ENCODE measurements at regions of chr16 and their contacts with region 1.

Region 1: DNA sequence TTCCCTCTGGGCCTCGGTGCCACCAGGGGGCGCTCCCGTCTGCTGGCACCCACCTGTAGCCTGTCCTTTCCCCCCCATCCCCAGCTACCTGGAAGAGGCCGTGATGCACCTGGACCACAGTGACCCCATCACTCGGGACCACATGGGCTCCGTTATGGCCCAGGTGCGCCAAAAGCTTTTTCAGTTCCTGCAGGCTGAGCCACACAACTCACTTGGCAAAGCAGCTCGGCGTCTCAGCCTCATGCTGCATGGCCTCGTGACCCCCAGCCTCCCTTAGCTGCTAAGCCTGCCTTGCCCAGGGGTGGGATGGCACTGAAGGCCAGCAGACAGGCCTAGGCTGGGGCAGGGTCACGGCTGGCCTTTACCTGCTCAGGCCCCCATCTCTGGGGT is 818 bp upstream of the NRN1L start:
- DNase-seq: peak; percentile 49 to 86 (median 79)
- ATAC-seq: peak; percentile 91
- H3K4me3 ChIP-seq: no peak overlapping the region
- H3K4me3 Mint-ChIP-seq: no peak overlapping the region
- H3K27ac ChIP-seq: no peak overlapping the region
- H3K27ac Mint-ChIP-seq: no peak overlapping the region
- H3K4me1 ChIP-seq: no peaks in the 10 kb centered on the region
- H3K4me1 Mint-ChIP-seq: no peaks in the 10 kb centered on the region
- H3K27me3 ChIP-seq: no peaks in the 10 kb centered on the region
- H3K27me3 Mint-ChIP-seq: no peaks in the 10 kb centered on the region
- CTCF ChIP-seq: peak; percentile 85

Region 2: GRCh38 chr16:67159593-67160406 is 724.1 kb before region 1 on chr16 and contains the starts of genes FBXL8 and TRADD:
- CTCF ChIA-PET with region 1: no interaction called
- POLR2A ChIA-PET with region 1: no interaction called
- intact Hi-C with region 1: no loop called
- DNase-seq: peak; percentile 53 to 90 (median 76)
- ATAC-seq: peak; percentile 69
- H3K4me3 ChIP-seq: peak within 1 kb of the TSS; percentile 94 to 97
- H3K4me3 Mint-ChIP-seq: peak within 1 kb of the TSS; percentile 89
- H3K27ac ChIP-seq: peak within 1 kb of the TSS; percentile 74 to 93
- H3K27ac Mint-ChIP-seq: peak within 1 kb of the TSS; percentile 95
- H3K4me1 ChIP-seq: peaks cover 72% of the 10 kb centered on the region
- H3K4me1 Mint-ChIP-seq: peaks cover 60% of the 10 kb centered on the region
- H3K27me3 ChIP-seq: peaks cover 13 to 33% of the 10 kb centered on the region in 2 experiments
- H3K27me3 Mint-ChIP-seq: peaks cover 20% of the 10 kb centered on the region
- CTCF ChIP-seq: peak; percentile 60
- total RNA-seq, gene FBXL8: 4.4 to 6.4 TPM
- total RNA-seq, gene TRADD: 15.5 to 17.1 TPM

Region 3: DNA sequence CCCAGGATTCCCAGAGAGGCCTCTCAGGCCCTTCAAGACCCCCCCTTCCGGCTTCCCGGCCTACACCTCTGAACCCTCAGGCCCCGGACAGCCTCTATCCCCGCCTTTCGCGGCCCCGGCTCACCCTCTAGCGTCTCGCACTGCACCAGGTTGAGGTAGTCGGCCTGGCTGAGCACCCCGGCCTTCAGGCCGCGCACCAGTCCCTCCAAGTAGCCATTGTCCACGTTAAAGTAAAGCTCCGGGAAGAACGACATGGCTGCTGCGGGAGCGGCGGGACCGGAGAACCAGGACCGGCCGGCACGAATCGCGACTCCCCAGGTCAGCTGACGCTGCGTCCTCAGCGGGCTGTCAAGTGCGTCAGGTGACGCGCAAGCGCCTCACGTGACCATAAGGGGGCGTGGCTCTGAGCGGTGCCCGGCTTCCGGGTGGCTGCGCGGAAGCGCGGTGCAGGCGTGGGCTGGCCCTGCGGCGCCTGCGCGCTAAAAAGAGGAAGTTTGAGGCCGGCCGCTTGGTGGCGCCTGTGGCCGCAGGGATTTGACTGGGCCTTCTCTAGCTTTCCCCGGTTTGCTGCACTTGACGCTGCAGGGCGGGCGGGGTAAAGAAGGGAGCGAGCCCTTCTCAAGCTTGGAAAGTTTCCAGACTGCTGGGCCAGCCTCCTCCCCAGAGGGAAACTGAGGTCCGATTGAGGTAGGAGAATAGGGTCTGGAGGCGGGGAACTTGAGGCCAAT is 402.9 kb before region 1 on chr16 and contains the start of gene ATP6V0D1:
- CTCF ChIA-PET with region 1: no interaction called
- POLR2A ChIA-PET with region 1: no interaction called
- intact Hi-C with region 1: no loop called
- DNase-seq: peak; percentile 98 to 99 (median 99)
- ATAC-seq: peak; percentile 90
- H3K4me3 ChIP-seq: peak within 1 kb of the TSS; percentile 91 to 100
- H3K4me3 Mint-ChIP-seq: peak within 1 kb of the TSS; percentile 99
- H3K27ac ChIP-seq: peak within 1 kb of the TSS; percentile 96 to 100
- H3K27ac Mint-ChIP-seq: peak within 1 kb of the TSS; percentile 99
- H3K4me1 ChIP-seq: peaks cover 30% of the 10 kb centered on the region
- H3K4me1 Mint-ChIP-seq: peaks cover 49% of the 10 kb centered on the region
- H3K27me3 ChIP-seq: no peaks in the 10 kb centered on the region
- H3K27me3 Mint-ChIP-seq: no peaks in the 10 kb centered on the region
- CTCF ChIP-seq: peak; percentile 87
- total RNA-seq, gene ATP6V0D1: 56.3 to 62.0 TPM

Region 4: DNA sequence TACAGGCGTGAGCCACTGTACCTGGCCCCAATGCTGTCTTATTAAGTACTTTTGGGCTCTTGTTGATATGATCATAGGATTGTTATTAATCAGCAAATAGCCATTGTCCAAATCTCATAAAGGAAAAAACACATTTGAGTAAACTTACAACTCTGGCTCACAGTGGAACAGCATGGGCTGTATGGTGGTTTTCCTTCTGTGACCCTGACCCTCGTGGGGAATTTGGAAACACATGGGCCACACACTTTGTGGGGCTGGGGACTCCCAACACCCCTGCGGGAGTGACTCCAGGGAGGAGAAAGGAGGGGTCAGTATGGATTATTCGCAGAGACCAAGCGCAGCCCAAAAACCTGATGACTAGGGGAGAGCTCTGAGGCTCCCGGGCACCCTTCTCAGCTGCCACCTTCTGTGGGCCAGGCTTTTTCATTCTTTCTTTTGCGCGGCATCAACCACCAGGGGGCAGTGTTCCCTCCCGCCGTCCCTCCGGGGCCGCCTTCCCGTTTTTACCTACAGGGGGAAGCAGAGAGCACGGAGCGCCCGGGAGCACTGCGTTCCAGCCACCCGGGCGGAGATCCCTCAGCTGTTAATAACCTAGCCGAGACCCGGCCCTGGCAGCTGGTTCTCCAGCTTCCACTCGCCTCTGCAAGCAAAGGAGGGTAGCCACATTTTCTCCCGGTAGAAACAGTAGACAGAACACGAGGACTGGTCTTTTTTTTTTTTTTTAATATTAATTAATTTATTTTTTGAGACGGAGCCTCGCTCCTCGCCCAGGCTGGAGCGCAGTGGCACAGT is 67.4 kb before region 1 on chr16:
- CTCF ChIA-PET with region 1: interaction called, 17 read pairs
- POLR2A ChIA-PET with region 1: no interaction called
- intact Hi-C with region 1: no loop called
- DNase-seq: peak; percentile 79 to 96 (median 90)
- ATAC-seq: peak; percentile 99
- H3K4me3 ChIP-seq: no peak overlapping the region
- H3K4me3 Mint-ChIP-seq: peak overlapping the region; percentile 66
- H3K27ac ChIP-seq: no peak overlapping the region
- H3K27ac Mint-ChIP-seq: no peak overlapping the region
- H3K4me1 ChIP-seq: peaks cover 4% of the 10 kb centered on the region
- H3K4me1 Mint-ChIP-seq: peaks cover 5% of the 10 kb centered on the region
- H3K27me3 ChIP-seq: no peaks in the 10 kb centered on the region
- H3K27me3 Mint-ChIP-seq: no peaks in the 10 kb centered on the region
- CTCF ChIP-seq: peak; percentile 100

Region 5: GRCh38 chr16:67872786-67873537 is 10.9 kb before region 1 on chr16 and contains the start of gene EDC4:
- CTCF ChIA-PET with region 1: interaction called, 30 read pairs
- POLR2A ChIA-PET with region 1: interaction called, 7 read pairs
- intact Hi-C with region 1: no loop called
- DNase-seq: peak; percentile 75 to 94 (median 86)
- ATAC-seq: peak; percentile 92
- H3K4me3 ChIP-seq: peak within 1 kb of the TSS; percentile 87 to 97
- H3K4me3 Mint-ChIP-seq: peak within 1 kb of the TSS; percentile 90
- H3K27ac ChIP-seq: peak within 1 kb of the TSS; percentile 78 to 83
- H3K27ac Mint-ChIP-seq: peak within 1 kb of the TSS; percentile 90
- H3K4me1 ChIP-seq: peaks cover 32% of the 10 kb centered on the region
- H3K4me1 Mint-ChIP-seq: peaks cover 32% of the 10 kb centered on the region
- H3K27me3 ChIP-seq: no peaks in the 10 kb centered on the region
- H3K27me3 Mint-ChIP-seq: no peaks in the 10 kb centered on the region
- CTCF ChIP-seq: no peak
- total RNA-seq, gene EDC4: 154 to 169 TPM

Region 6: DNA sequence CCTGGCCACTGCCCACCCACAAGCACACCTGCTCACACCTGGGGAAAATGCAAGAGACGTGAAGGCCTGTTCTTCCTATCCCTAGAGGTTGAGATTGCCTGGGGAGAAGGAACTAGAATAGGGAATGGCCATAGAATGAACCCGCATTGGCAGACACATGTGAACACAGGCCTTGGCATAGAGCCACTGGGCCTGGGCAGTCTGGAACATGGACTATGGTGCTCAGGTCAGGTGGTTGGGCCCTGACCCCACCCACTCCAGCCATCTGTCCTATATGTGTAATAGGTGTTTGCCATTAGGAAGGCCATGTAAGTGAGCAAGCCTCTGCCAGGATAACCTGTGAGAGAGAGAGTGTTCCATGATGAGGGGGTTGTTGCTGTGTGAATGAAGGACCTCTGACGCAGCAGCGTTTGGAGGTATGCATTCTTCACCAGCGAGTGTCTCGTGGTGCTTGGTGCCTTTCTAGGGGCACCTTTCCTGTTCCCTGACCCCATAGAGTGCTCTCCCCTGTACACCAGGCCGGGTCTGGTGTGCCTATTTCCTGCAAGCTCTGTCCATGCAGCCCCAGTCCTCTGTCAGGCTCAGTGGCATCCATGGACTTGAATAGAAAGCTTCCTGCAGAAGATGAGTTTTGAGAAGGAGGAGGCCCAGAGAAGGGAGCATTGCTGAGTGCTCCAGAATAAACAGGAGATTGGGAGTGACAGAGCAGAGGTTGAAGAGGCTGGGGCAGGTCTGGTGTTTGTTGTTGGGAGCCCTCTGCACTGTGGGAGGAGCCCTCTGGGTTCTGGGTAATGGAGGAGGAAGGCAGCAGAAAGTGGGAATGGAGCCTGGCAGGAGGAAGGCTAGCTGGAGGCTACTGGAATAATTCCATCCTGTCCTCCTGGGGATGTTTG is 32.2 kb after region 1 on chr16:
- CTCF ChIA-PET with region 1: interaction called, 29 read pairs
- POLR2A ChIA-PET with region 1: no interaction called
- intact Hi-C with region 1: no loop called
- DNase-seq: no peak
- ATAC-seq: no peak
- H3K4me3 ChIP-seq: no peak overlapping the region
- H3K4me3 Mint-ChIP-seq: no peak overlapping the region
- H3K27ac ChIP-seq: no peak overlapping the region
- H3K27ac Mint-ChIP-seq: no peak overlapping the region
- H3K4me1 ChIP-seq: no peaks in the 10 kb centered on the region
- H3K4me1 Mint-ChIP-seq: peaks cover 30% of the 10 kb centered on the region
- H3K27me3 ChIP-seq: no peaks in the 10 kb centered on the region
- H3K27me3 Mint-ChIP-seq: no peaks in the 10 kb centered on the region
- CTCF ChIP-seq: no peak

Region 7: DNA sequence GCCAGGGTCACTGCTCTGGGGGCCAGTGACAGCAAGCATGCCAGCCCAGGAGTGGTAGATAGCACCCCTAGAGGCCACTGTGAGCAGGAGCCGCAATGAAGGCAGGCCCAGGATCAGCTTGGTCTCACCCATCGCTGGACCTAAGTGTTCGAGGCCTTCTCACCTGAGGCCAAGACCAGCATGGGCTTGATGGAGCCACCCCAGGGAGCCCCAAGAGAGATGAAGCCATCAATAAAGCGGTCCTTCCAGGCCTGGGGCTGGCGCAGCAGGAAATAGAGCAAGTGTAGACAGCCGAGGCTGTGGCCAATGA is 58.3 kb after region 1 on chr16:
- CTCF ChIA-PET with region 1: interaction called, 42 read pairs
- POLR2A ChIA-PET with region 1: no interaction called
- intact Hi-C with region 1: loop called in 1 of 2 experiments (anchors 2 kb)
- DNase-seq: peak in 4 of 9 experiments; percentile 22 to 54 (median 38)
- ATAC-seq: peak; percentile 56
- H3K4me3 ChIP-seq: no peak overlapping the region
- H3K4me3 Mint-ChIP-seq: no peak overlapping the region
- H3K27ac ChIP-seq: no peak overlapping the region
- H3K27ac Mint-ChIP-seq: peak overlapping the region; percentile 45
- H3K4me1 ChIP-seq: peaks cover 41% of the 10 kb centered on the region
- H3K4me1 Mint-ChIP-seq: peaks cover 31% of the 10 kb centered on the region
- H3K27me3 ChIP-seq: no peaks in the 10 kb centered on the region
- H3K27me3 Mint-ChIP-seq: no peaks in the 10 kb centered on the region
- CTCF ChIP-seq: peak; percentile 45

Region 8: GRCh38 chr16:68040507-68041288 is 156.8 kb after region 1 on chr16:
- CTCF ChIA-PET with region 1: interaction called, 93 read pairs
- POLR2A ChIA-PET with region 1: no interaction called
- intact Hi-C with region 1: loop called (anchors 1 kb)
- DNase-seq: peak; percentile 84 to 98 (median 90)
- ATAC-seq: peak; percentile 99
- H3K4me3 ChIP-seq: no peak overlapping the region
- H3K4me3 Mint-ChIP-seq: no peak overlapping the region
- H3K27ac ChIP-seq: peak overlapping the region in 1 of 2 experiments; percentile 7
- H3K27ac Mint-ChIP-seq: peak overlapping the region; percentile 45
- H3K4me1 ChIP-seq: peaks cover 6% of the 10 kb centered on the region
- H3K4me1 Mint-ChIP-seq: peaks cover 11% of the 10 kb centered on the region
- H3K27me3 ChIP-seq: no peaks in the 10 kb centered on the region
- H3K27me3 Mint-ChIP-seq: no peaks in the 10 kb centered on the region
- CTCF ChIP-seq: peak; percentile 88

Region 9: DNA sequence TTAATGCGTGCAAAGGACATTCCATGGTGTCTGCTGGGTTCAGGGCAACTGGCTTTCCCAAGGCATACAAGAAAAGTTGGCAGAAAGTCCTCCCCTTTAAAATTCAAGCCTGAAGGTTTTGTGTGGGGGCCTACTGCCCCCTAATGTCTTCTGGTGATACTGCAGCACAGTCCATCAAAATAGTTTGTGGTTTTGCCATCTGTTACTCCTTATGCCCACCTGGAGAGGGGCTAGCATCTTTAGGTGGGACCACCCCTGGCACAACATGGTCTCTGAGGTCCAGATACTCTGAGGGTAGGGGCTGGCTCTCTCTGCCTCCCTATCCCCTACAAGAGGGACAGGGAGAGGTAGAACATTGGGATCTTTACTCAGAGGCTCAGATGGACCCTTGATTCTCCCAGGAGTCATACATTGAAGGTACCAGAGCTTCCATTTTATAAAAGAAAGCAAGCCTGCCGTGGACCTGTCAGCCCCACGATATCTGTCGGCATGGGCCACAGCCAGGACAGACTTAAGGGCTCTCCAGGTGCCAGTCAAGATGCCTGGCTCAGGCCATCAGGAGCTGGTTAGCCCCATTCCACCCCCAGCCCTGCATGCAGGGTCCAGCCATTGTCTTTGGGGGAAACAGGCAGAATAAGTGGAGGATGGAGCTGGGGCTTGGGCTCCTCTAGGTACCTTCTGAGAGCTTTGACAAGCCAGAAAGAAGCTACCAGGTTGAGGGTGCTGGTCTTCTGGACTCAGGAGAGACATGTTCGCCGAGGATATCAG is 345.7 kb after region 1 on chr16:
- CTCF ChIA-PET with region 1: interaction called, 9 read pairs
- POLR2A ChIA-PET with region 1: no interaction called
- intact Hi-C with region 1: loop called (anchors 1 kb)
- DNase-seq: peak in 6 of 9 experiments; percentile 36 to 72 (median 56)
- ATAC-seq: peak; percentile 64
- H3K4me3 ChIP-seq: no peak overlapping the region
- H3K4me3 Mint-ChIP-seq: no peak overlapping the region
- H3K27ac ChIP-seq: no peak overlapping the region
- H3K27ac Mint-ChIP-seq: peak overlapping the region; percentile 53
- H3K4me1 ChIP-seq: peaks cover 20% of the 10 kb centered on the region
- H3K4me1 Mint-ChIP-seq: peaks cover 41% of the 10 kb centered on the region
- H3K27me3 ChIP-seq: no peaks in the 10 kb centered on the region
- H3K27me3 Mint-ChIP-seq: no peaks in the 10 kb centered on the region
- CTCF ChIP-seq: peak; percentile 81

Region 10: DNA sequence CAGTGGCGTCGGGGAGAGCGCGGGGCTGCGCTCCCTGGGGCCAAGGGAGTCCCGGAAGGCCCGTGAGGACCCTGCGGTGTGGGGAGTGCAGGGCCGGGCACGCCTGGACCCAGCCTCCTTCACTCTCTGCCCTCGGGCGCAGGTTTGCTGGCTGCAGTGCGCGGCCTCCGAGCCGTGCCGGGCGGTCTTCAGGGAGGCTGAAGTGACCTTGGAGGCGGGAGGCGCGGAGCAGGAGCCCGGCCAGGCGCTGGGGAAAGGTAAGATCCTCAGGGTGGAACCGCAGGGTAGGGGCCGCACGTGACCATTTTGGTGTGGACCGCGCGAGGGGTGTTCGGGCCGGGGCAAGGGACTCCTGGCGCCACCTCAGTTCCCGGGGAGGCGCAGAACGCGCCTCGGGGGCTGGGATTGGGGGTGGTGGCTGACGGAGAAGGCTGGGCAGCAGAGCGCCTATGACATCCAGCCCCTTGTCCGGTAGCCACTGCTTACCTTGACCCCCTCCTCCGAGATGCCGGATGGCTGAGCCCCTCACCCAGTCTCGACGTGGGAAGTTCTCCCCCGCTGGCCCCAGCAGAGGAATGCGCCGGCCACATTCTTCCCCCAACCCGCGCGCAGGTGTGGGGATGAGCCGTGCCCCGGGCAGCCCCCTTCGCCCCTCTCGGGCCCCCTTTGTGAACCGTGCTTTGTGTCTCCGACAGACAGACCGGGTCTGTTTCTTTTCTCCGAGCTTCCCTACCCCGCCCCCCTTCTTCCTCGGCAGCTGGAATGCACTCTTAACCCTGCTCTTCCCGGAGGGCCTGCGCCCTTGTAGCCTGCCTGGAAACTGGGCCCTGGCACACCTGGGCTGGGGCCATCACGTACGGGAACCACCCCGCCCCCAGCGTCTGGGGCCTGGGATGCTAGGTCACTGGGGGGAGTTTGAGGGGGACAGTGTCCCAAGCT is 761.9 kb after region 1 on chr16:
- CTCF ChIA-PET with region 1: no interaction called
- POLR2A ChIA-PET with region 1: no interaction called
- intact Hi-C with region 1: no loop called
- DNase-seq: no peak
- ATAC-seq: peak; percentile 14
- H3K4me3 ChIP-seq: peak overlapping the region in 1 of 2 experiments; percentile 37
- H3K4me3 Mint-ChIP-seq: peak overlapping the region; percentile 47
- H3K27ac ChIP-seq: no peak overlapping the region
- H3K27ac Mint-ChIP-seq: no peak overlapping the region
- H3K4me1 ChIP-seq: peaks cover 16% of the 10 kb centered on the region
- H3K4me1 Mint-ChIP-seq: peaks cover 15% of the 10 kb centered on the region
- H3K27me3 ChIP-seq: peaks cover 29 to 32% of the 10 kb centered on the region in 2 experiments
- H3K27me3 Mint-ChIP-seq: peaks cover 55% of the 10 kb centered on the region
- CTCF ChIP-seq: no peak